ENCODE measurements at regions of chr1 and their contacts with region 1.

Region 1: GRCh38 chr1:78676347-78676982 is 26.8 kb downstream of the IFI44 start:
- DNase-seq: peak; percentile 64
- H3K4me3 Mint-ChIP-seq: no peak overlapping the region
- H3K27ac Mint-ChIP-seq: no peak overlapping the region
- H3K4me1 Mint-ChIP-seq: peaks cover 10% of the 10 kb centered on the region
- H3K27me3 Mint-ChIP-seq: no peaks in the 10 kb centered on the region
- CTCF ChIP-seq: no peak

Region 2: DNA sequence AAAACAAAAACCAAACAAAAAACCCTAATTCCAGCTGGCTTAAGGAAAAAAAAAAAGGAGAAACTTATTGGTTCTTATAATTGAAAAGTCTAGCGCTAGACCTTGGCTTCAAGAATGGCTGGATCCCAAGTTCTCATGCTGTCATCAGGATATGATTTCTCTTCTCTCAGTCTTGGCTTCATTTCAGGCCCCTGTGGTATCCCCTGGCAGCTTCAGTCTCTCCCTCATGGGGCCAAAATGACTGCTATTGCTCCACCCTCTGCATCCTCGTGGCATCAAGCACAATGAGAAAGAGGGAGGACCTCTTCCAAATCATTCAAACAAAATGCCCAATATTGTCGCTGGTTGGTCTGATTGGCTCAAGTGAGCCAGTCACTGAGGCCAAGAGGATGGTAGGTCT is 550.0 kb before region 1 on chr1:
- CTCF ChIA-PET with region 1: interaction called, 3 read pairs
- intact Hi-C with region 1: loop called (anchors 2 kb)
- DNase-seq: no peak
- H3K4me3 Mint-ChIP-seq: no peak overlapping the region
- H3K27ac Mint-ChIP-seq: no peak overlapping the region
- H3K4me1 Mint-ChIP-seq: no peaks in the 10 kb centered on the region
- H3K27me3 Mint-ChIP-seq: no peaks in the 10 kb centered on the region
- CTCF ChIP-seq: no peak

Region 3: DNA sequence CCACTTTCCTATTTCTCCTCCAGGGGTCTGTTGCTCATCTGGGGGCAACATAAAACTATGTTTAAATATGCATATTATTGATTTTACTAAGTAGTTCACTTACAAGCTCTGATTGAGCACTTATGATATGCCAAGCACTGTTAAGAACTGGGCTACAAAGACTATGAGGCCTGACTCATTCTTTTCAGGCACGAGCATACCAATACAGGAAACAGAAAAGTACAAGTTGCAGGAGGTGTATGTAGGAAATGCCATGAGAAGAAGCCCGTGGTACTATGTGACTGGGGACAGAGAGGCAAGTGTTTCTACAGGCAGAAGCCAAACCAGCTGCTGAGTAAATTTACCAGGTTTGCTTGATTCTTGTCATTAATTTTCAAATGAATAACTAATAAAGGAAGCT is 306.1 kb before region 1 on chr1:
- CTCF ChIA-PET with region 1: no interaction called
- intact Hi-C with region 1: no loop called
- DNase-seq: no peak
- H3K4me3 Mint-ChIP-seq: no peak overlapping the region
- H3K27ac Mint-ChIP-seq: no peak overlapping the region
- H3K4me1 Mint-ChIP-seq: no peaks in the 10 kb centered on the region
- H3K27me3 Mint-ChIP-seq: no peaks in the 10 kb centered on the region
- CTCF ChIP-seq: no peak

Region 4: DNA sequence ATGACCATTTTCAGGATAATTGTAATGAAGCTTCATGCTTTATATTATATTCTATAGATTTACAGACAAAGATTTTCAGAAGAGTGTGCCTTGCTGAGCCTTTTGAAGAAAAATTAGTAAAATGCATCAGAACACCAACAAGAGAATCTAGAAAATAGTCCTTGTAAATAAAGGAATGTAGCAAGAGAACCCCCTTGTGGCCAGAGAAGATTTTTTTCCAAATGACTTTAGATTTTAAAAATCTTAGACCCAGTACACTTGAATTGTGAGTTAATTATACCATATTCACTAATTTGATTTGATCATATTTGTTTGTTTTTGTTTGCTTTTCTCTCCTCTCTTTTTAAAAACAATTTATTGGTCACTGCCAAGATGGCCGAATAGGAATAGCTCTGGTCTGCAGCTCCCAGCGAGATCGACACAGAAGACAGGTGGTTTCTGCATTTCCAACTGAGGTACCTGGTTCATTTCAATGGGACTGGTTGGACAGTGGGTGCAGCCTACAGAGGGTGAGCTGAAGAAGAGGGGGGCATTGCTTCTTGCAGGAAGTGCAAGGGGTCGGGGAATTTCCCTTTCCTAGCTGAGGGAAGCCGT is 69.0 kb before region 1 on chr1:
- CTCF ChIA-PET with region 1: no interaction called
- intact Hi-C with region 1: no loop called
- DNase-seq: no peak
- H3K4me3 Mint-ChIP-seq: no peak overlapping the region
- H3K27ac Mint-ChIP-seq: no peak overlapping the region
- H3K4me1 Mint-ChIP-seq: no peaks in the 10 kb centered on the region
- H3K27me3 Mint-ChIP-seq: no peaks in the 10 kb centered on the region
- CTCF ChIP-seq: no peak

Region 5: GRCh38 chr1:78633209-78633608 is 43.3 kb before region 1 on chr1:
- CTCF ChIA-PET with region 1: no interaction called
- intact Hi-C with region 1: no loop called
- DNase-seq: no peak
- H3K4me3 Mint-ChIP-seq: no peak overlapping the region
- H3K27ac Mint-ChIP-seq: no peak overlapping the region
- H3K4me1 Mint-ChIP-seq: no peaks in the 10 kb centered on the region
- H3K27me3 Mint-ChIP-seq: no peaks in the 10 kb centered on the region
- CTCF ChIP-seq: no peak

Measured in Calu3 (cell line).